Activated CD4-positive, alpha-beta T cell treated with anti-CD3 and anti-CD28 coated beads for 36 hours (primary cell): ENCODE measurements at regions of chr1 and their contacts with region 1.

Region 1: GRCh38 chr1:65812065-65812464 is 19.4 kb downstream of the PDE4B start:
- DNase-seq: peak; percentile 81
- ATAC-seq: peak; percentile 98
- H3K4me3 Mint-ChIP-seq: peak overlapping the region; percentile 11
- H3K27ac Mint-ChIP-seq: peak overlapping the region; percentile 74
- H3K4me1 Mint-ChIP-seq: peaks cover 24% of the 10 kb centered on the region
- H3K27me3 Mint-ChIP-seq: peaks cover 36% of the 10 kb centered on the region

Region 2: DNA sequence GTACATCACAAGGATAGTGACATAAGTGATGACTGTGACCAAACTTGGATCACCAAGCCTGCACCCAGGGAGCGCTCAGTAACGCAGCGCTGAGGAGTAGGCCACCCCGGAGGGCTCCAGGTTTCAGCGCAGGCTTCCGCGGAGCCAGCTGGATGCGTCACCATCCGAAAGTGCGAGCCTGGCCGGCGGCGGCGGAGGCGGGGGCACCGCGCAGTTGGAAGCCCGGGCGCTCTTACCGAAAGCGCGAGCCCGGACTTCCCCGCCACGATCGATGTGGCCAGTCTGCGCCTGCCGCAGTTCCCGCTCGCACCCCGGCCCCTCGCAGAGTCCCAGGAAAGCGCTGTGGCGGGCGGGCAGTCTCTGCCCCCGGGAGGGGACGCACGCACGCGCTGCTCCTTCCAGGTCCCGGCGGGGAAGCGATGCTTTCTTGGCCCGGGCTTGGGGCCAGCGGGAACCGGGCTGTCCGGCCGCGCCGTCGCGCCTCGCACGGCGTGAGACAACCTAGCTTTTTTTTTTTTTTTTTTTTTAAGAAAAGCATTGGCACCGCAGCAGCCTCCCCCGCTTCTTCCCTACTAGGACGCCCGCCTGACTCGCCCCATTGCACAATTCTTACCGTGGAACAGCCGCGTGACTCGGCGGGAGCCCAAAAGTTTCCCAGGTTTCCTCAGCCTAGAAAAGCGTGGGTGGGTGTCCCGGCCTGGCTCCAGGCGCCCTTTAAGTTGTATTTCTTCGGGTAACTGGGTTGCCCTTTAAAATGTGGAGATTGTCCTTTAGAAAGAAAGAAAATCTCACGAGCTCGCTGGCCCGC is 809.4 kb before region 1 on chr1:
- CTCF ChIA-PET with region 1: no interaction called
- POLR2A ChIA-PET with region 1: no interaction called
- intact Hi-C with region 1: loop called in 1 of 2 experiments (anchors 5 kb)
- DNase-seq: peak; percentile 86
- ATAC-seq: peak; percentile 85
- H3K4me3 Mint-ChIP-seq: peak overlapping the region; percentile 70
- H3K27ac Mint-ChIP-seq: peak overlapping the region; percentile 87
- H3K4me1 Mint-ChIP-seq: peaks cover 28% of the 10 kb centered on the region
- H3K27me3 Mint-ChIP-seq: no peaks in the 10 kb centered on the region

Region 3: GRCh38 chr1:65230731-65231481 is 581.2 kb before region 1 on chr1:
- CTCF ChIA-PET with region 1: no interaction called
- POLR2A ChIA-PET with region 1: no interaction called
- intact Hi-C with region 1: loop called in 1 of 2 experiments (anchors 1 kb)
- DNase-seq: no peak
- ATAC-seq: peak; percentile 84
- H3K4me3 Mint-ChIP-seq: no peak overlapping the region
- H3K27ac Mint-ChIP-seq: no peak overlapping the region
- H3K4me1 Mint-ChIP-seq: peaks cover 23% of the 10 kb centered on the region
- H3K27me3 Mint-ChIP-seq: peaks cover 5% of the 10 kb centered on the region

Region 4: DNA sequence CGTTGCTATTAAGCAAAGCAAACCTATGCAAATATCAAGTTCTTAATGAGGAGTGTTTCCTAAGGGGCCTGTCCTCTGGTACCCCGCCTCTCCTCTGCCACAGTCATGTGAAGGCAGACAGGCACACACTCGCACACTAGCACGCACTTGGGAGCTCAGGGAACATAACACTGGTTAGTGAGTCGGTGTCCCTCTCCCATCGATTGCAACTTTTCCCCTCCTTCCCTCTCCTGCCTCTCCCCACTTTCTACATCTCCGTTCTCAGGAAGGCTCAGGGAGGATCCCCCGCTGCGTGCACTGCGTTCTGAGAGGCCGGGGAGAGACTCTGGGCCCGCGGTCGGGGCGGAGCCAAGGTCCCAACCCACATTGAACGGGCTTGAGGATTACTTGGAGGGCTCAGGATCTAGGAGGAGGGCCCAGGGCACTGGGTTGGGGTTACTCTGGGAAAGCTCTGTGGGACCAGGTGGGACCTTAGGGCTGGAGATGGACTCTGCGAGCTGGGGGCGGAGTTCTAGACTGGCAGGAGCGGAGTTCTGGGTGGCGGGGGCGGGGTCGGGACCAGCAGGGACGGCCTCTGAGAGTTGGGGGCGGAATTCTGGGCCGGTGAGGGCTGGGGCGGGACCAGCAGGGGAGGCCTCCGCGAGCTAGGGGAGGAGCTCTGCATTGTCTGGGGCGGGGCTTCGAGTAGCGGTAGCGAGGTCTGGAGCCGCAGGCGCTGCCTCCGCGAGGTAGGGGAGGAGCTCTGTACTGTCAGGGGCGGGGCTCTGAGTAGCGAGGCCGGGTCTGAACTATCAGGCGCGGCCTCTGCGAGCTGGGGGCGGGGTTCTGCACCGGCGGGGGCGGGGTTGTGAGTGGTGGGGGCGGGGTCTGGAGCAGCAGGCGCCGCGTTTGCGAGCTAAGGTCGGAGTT is 392.1 kb before region 1 on chr1:
- CTCF ChIA-PET with region 1: no interaction called
- POLR2A ChIA-PET with region 1: no interaction called
- intact Hi-C with region 1: loop called in 1 of 2 experiments (anchors 1 kb)
- DNase-seq: peak; percentile 99
- ATAC-seq: peak; percentile 96
- H3K4me3 Mint-ChIP-seq: no peak overlapping the region
- H3K27ac Mint-ChIP-seq: peak overlapping the region; percentile 94
- H3K4me1 Mint-ChIP-seq: peaks cover 13% of the 10 kb centered on the region
- H3K27me3 Mint-ChIP-seq: no peaks in the 10 kb centered on the region

Region 5: GRCh38 chr1:65703853-65704252 is 108.2 kb before region 1 on chr1:
- CTCF ChIA-PET with region 1: no interaction called
- POLR2A ChIA-PET with region 1: no interaction called
- intact Hi-C with region 1: no loop called
- DNase-seq: no peak
- ATAC-seq: no peak
- H3K4me3 Mint-ChIP-seq: no peak overlapping the region
- H3K27ac Mint-ChIP-seq: no peak overlapping the region
- H3K4me1 Mint-ChIP-seq: no peaks in the 10 kb centered on the region
- H3K27me3 Mint-ChIP-seq: peaks cover 8% of the 10 kb centered on the region

Region 6: GRCh38 chr1:65958561-65959350 is 146.7 kb after region 1 on chr1:
- CTCF ChIA-PET with region 1: no interaction called
- POLR2A ChIA-PET with region 1: no interaction called
- intact Hi-C with region 1: loop called in 1 of 2 experiments (anchors 5 kb)
- DNase-seq: peak; percentile 23
- ATAC-seq: peak; percentile 70
- H3K4me3 Mint-ChIP-seq: no peak overlapping the region
- H3K27ac Mint-ChIP-seq: no peak overlapping the region
- H3K4me1 Mint-ChIP-seq: no peaks in the 10 kb centered on the region
- H3K27me3 Mint-ChIP-seq: no peaks in the 10 kb centered on the region

Region 7: GRCh38 chr1:66231217-66231616 is 419.2 kb after region 1 on chr1:
- CTCF ChIA-PET with region 1: no interaction called
- POLR2A ChIA-PET with region 1: no interaction called
- intact Hi-C with region 1: loop called in 1 of 2 experiments (anchors 1 kb)
- DNase-seq: no peak
- ATAC-seq: peak; percentile 97
- H3K4me3 Mint-ChIP-seq: no peak overlapping the region
- H3K27ac Mint-ChIP-seq: no peak overlapping the region
- H3K4me1 Mint-ChIP-seq: peaks cover 15% of the 10 kb centered on the region
- H3K27me3 Mint-ChIP-seq: peaks cover 6% of the 10 kb centered on the region

Region 8: GRCh38 chr1:66396212-66396890 is 584.3 kb after region 1 on chr1:
- CTCF ChIA-PET with region 1: no interaction called
- POLR2A ChIA-PET with region 1: no interaction called
- intact Hi-C with region 1: loop called in 1 of 2 experiments (anchors 1 kb)
- DNase-seq: peak; percentile 39
- ATAC-seq: peak; percentile 56
- H3K4me3 Mint-ChIP-seq: no peak overlapping the region
- H3K27ac Mint-ChIP-seq: no peak overlapping the region
- H3K4me1 Mint-ChIP-seq: peaks cover 39% of the 10 kb centered on the region
- H3K27me3 Mint-ChIP-seq: peaks cover 2% of the 10 kb centered on the region